Uterus (tissue), 4 donors: ENCODE measurements at regions of chr6 and their contacts with region 1.

Region 1: DNA sequence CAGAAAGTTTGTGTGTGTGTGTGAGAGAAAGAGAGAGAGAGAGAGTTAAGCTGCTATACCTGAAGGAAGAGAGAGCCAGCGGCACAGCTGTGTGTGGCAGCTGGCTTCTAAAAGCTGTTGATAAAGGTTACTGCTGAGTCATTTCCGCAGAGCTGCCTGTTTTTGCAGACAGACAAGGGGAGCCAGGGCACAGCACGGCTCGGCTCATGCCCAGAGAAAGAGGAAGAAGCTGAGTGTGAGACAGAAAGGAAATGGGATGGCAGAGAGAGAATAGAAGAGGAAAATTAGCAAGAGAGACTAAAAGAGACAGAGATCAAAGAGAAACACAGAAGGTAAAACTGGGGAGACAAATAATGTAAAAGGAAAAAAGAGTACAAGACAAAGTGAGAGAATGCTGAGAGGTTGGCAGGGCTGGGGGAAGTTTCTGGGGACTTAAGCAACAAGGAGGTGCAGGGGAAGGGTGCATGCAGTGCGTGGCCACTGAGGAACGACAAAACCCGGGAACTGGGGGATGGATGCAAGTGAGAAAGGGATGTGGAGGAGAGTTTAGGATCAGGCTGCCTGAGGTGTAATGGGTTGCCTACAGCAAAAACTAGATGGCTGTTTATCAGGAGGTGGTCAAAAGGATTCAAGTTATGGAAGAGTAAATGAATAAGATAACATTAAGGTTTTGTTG is 22.7 kb downstream of the HLA-A start:
- DNase-seq: peak; percentile 50 to 72
- H3K4me3 ChIP-seq: peak overlapping the region; percentile 11 to 15
- H3K27ac ChIP-seq: peak overlapping the region; percentile 78 to 86
- H3K4me1 ChIP-seq: peaks cover 0 to 4% of the 10 kb centered on the region in 2 donors
- H3K27me3 ChIP-seq: no peaks in the 10 kb centered on the region
- CTCF ChIP-seq: no peak
- POLR2A ChIP-seq: no peak

Region 2: DNA sequence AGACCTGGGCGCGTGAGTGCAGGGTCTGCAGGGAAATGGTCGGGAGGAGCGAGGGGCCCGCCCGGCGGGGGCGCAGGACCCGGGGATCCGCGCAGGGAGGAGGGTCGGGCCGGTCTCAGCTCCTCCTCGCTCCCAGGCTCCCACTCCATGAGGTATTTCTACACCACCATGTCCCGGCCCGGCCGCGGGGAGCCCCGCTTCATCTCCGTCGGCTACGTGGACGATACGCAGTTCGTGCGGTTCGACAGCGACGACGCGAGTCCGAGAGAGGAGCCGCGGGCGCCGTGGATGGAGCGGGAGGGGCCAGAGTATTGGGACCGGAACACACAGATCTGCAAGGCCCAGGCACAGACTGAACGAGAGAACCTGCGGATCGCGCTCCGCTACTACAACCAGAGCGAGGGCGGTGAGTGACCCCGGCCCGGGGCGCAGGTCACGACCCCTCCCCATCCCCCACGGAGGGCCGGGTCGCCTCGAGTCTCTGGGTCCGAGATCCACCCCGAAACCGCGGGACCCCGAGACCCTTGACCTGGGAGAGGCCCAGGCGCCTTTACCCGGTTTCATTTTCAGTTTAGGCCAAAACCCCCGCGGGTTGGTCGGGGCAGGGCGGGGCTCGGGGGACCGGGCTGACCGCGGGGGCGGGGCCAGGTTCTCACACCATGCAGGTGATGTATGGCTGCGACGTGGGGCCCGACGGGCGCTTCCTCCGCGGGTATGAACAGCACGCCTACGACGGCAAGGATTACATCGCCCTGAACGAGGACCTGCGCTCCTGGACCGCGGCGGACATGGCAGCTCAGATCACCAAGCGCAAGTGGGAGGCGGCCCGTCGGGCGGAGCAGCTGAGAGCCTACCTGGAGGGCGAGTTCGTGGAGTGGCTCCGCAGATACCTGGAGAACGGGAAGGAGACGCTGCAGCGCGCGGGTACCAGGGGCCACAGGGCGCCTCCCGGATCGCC is 76.9 kb before region 1 on chr6:
- intact Hi-C with region 1: loop called (anchors 5 kb)
- DNase-seq: peak; percentile 85 to 86
- H3K4me3 ChIP-seq: peak overlapping the region in 1 of 2 donors; percentile 66
- H3K27ac ChIP-seq: peak overlapping the region in 1 of 2 donors; percentile 98
- H3K4me1 ChIP-seq: no peaks in the 10 kb centered on the region
- H3K27me3 ChIP-seq: no peaks in the 10 kb centered on the region
- CTCF ChIP-seq: no peak
- POLR2A ChIP-seq: peak in 1 of 2 donors; percentile 12